ENCODE measurements at regions of chr12 and their contacts with region 1.

Region 1: GRCh38 chr12:107131832-107132616 is 38.7 kb upstream of the CRY1 start:
- DNase-seq: no peak
- ATAC-seq: peak in 1 of 4 donors; percentile 54
- H3K4me3 ChIP-seq: no peak overlapping the region
- H3K27ac ChIP-seq: no peak overlapping the region
- H3K4me1 ChIP-seq: no peaks in the 10 kb centered on the region
- H3K27me3 ChIP-seq: no peaks in the 10 kb centered on the region
- CTCF ChIP-seq: peak; percentile 62

Region 2: DNA sequence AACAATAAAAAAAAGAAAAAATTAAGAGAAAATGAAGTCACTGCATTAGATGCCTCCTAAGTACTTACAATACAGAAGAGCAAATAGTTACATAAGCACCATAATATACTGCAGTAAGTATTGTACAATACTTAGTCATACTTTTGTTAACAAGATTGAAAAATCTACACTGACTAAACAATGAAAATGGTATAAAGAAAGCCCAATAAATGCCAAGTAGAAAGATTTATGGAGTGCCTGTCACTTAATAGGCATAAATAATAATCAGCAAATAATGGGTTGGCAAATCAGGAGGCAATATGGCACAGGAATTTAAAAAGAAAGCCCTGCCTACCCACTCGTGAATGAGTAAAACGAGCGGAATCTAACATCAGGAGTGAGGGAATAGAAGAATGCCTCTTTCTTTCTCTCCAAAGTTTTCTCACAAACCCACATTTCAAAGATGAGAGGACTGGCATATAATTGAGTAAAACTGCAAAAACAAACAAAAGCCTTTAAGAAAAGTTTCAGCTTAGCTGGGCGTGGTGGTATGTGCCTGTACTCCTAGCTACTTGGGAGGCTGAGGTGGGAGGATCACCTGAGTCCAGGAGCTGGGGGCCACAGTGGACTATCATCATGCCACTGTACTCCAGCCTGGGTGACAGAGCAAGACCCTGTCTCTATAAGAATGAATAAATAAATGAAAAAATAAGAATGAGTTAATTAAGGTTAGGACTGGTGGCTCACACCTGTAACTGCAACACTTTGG is 74.8 kb before region 1 on chr12:
- intact Hi-C with region 1: no loop called
- DNase-seq: no peak
- ATAC-seq: no peak
- H3K4me3 ChIP-seq: no peak overlapping the region
- H3K27ac ChIP-seq: no peak overlapping the region
- H3K4me1 ChIP-seq: peaks cover 9% of the 10 kb centered on the region
- H3K27me3 ChIP-seq: no peaks in the 10 kb centered on the region
- CTCF ChIP-seq: no peak

Region 3: GRCh38 chr12:107079172-107080011 is 52.6 kb before region 1 on chr12:
- intact Hi-C with region 1: no loop called
- DNase-seq: no peak
- ATAC-seq: no peak
- H3K4me3 ChIP-seq: no peak overlapping the region
- H3K27ac ChIP-seq: no peak overlapping the region
- H3K4me1 ChIP-seq: peaks cover 5% of the 10 kb centered on the region
- H3K27me3 ChIP-seq: no peaks in the 10 kb centered on the region
- CTCF ChIP-seq: no peak

Region 4: DNA sequence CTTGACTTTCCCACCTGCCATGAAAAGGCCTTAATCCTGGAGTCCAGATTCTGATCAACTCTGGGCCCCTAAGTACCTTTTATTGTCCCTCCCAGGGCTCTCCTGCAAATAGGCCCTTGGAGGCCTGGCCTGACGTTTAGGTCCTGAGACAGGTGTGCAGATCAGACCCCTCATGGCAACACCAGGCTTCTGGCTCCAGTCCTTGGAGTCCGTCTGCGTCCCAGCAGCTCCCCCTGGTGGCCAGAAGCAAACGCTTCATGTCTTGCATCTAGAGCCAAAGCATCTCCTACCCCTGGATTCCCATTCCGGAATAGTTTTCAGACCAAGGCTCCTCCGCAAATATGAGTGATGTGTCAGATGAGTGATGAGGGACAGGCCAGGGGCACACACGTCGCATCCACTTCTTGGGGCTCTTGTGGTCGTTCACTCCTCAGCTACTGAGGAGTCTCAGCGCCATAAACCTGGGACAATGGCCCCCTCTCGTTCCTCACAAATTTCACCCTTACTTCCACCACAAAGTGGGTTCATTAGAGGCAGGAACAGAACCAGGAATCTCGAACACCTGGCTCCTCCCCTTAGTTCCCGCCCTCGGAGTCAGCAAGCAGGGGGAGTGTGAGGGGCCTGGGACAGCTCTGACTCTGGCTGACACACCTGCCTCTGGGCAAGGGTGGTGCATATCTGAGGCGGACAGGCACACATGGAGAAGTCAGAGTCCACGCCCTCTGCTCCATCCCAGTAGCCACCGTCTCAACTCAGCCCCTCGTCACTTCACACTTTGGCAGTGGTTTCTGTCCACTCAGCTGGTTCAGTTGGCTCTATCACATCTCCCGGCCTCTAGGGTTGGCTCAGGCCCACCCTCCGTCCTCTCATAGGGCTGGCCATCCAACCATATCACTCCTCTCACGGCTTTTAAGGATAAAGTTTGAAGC is 475.7 kb after region 1 on chr12:
- intact Hi-C with region 1: loop called (anchors 2 to 5 kb)
- DNase-seq: peak; percentile 73 to 87
- ATAC-seq: peak in 2 of 4 donors; percentile 50 to 55
- H3K4me3 ChIP-seq: no peak overlapping the region
- H3K27ac ChIP-seq: no peak overlapping the region
- H3K4me1 ChIP-seq: no peaks in the 10 kb centered on the region
- H3K27me3 ChIP-seq: peaks cover 0 to 2% (median 0%) of the 10 kb centered on the region in 3 donors
- CTCF ChIP-seq: peak; percentile 69

Measured in psoas muscle (tissue), 8 donors.